CD14-positive monocyte (primary cell): ENCODE measurements at regions of chr21 and their contacts with region 1.

Region 1: GRCh38 chr21:42117229-42117966 is 46.3 kb downstream of the UMODL1 start:
- DNase-seq: peak; percentile 62 to 80 (median 66)
- H3K4me3 ChIP-seq: no peak overlapping the region
- H3K4me3 Mint-ChIP-seq: peak overlapping the region in 1 of 2 donors; percentile 84
- H3K27ac ChIP-seq: no peak overlapping the region
- H3K27ac Mint-ChIP-seq: peak overlapping the region in 4 of 7 donors; percentile 18 to 46 (median 36)
- H3K4me1 ChIP-seq: peaks cover 40 to 42% of the 10 kb centered on the region in 2 donors
- H3K4me1 Mint-ChIP-seq: peaks cover 51% of the 10 kb centered on the region
- H3K27me3 ChIP-seq: peaks cover 5 to 33% of the 10 kb centered on the region in 2 donors
- H3K27me3 Mint-ChIP-seq: peaks cover 30 to 48% (median 39%) of the 10 kb centered on the region in 3 donors
- CTCF ChIP-seq: peak; percentile 98

Region 2: GRCh38 chr21:41612674-41613532 is 504.5 kb before region 1 on chr21:
- intact Hi-C with region 1: loop called in 1 of 2 experiments (anchors 10 kb)
- DNase-seq: peak in 2 of 3 donors; percentile 19 to 30
- H3K4me3 ChIP-seq: no peak overlapping the region
- H3K4me3 Mint-ChIP-seq: peak overlapping the region in 1 of 2 donors; percentile 48
- H3K27ac ChIP-seq: no peak overlapping the region
- H3K27ac Mint-ChIP-seq: no peak overlapping the region
- H3K4me1 ChIP-seq: no peaks in the 10 kb centered on the region
- H3K4me1 Mint-ChIP-seq: no peaks in the 10 kb centered on the region
- H3K27me3 ChIP-seq: peaks cover 0 to 4% of the 10 kb centered on the region in 2 donors
- H3K27me3 Mint-ChIP-seq: peaks cover 9 to 19% (median 11%) of the 10 kb centered on the region in 3 donors
- CTCF ChIP-seq: peak; percentile 82

Region 3: GRCh38 chr21:41816220-41817165 is 300.9 kb before region 1 on chr21:
- intact Hi-C with region 1: loop called (anchors 5 kb)
- DNase-seq: peak; percentile 15 to 46 (median 31)
- H3K4me3 ChIP-seq: peak overlapping the region in 1 of 3 experiments; percentile 28
- H3K4me3 Mint-ChIP-seq: peak overlapping the region in 1 of 2 donors; percentile 71
- H3K27ac ChIP-seq: no peak overlapping the region
- H3K27ac Mint-ChIP-seq: peak overlapping the region in 5 of 7 donors; percentile 6 to 68 (median 33)
- H3K4me1 ChIP-seq: peaks cover 4 to 6% of the 10 kb centered on the region in 2 donors
- H3K4me1 Mint-ChIP-seq: peaks cover 7% of the 10 kb centered on the region
- H3K27me3 ChIP-seq: no peaks in the 10 kb centered on the region
- H3K27me3 Mint-ChIP-seq: no peaks in the 10 kb centered on the region
- CTCF ChIP-seq: peak; percentile 84

Region 4: DNA sequence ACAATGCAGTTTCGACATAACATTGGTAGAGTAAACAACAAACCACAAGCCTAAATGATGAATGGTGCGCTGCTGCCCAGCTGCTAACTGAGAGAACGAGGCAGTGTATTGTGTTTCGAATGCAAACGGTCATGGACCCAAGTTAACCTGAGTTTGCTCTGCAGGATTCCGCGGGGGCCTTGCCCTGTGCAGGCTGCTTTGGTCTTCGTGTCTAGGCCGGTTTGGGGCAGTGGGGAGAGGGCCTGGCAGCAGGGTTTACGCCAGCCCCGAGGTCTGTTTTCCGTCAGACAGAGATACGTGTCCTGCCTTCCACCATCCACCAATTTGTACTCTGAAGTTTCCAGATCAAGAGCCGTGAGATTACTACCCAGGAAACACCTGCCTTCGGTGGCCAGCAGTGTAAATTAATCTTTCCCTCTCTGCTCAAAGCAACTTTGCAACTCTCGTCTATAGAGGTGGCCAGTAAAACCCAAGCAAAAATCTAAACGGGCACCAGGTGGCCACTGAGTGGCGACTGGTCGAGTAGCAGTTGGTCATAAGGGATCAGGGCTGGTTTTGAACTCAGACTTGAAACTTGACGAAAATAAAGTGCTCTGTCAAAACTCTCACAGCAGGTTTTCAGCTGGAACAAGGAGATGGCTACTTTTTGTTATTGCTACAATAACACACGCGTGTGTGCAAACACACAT is 231.9 kb before region 1 on chr21:
- intact Hi-C with region 1: loop called in 1 of 2 experiments (anchors 5 kb)
- DNase-seq: no peak
- H3K4me3 ChIP-seq: no peak overlapping the region
- H3K4me3 Mint-ChIP-seq: peak overlapping the region; percentile 3 to 23
- H3K27ac ChIP-seq: no peak overlapping the region
- H3K27ac Mint-ChIP-seq: peak overlapping the region in 1 of 7 donors; percentile 33
- H3K4me1 ChIP-seq: peaks cover 0 to 6% of the 10 kb centered on the region in 2 donors
- H3K4me1 Mint-ChIP-seq: peaks cover 16% of the 10 kb centered on the region
- H3K27me3 ChIP-seq: no peaks in the 10 kb centered on the region
- H3K27me3 Mint-ChIP-seq: peaks cover 2 to 8% (median 2%) of the 10 kb centered on the region in 3 donors
- CTCF ChIP-seq: peak; percentile 11

Region 5: DNA sequence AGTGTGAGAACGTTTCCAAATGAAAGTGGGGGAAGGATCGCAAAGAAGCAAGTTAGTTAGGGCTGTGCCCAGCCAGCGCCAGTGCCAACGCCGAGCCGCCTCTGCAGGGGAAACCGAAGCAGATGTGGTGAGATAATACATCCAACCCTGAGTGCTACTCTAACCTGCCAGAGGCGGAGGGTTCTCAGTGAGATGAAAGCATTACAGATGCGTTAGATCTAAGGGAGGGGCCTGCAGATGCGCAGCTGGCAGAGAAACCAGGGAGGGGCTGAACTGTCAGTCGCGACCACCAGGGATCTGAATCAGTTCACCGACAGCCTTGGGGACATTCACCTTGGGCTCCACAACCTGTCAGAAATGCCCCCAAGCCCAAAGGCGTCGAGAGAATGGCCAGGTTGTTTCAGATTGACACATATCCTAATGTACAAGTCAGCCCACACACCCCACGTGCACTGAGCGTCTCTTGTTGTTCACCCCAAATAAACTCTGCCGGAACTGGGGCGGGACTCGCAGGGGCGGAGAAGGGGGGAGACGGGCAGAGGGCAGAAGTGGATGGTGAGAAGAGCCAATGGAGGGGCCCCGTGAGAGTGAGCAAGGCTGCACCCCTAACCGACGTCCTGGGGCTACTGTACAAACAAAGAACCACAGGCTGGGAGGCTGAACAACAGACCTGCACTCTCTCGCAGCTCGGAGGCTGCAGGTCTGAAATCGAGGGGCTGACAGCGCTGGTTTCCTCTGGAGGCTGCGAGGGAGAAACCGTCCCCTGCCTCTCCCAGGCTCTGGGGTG is 55.0 kb before region 1 on chr21:
- intact Hi-C with region 1: loop called in 1 of 2 experiments (anchors 10 kb)
- DNase-seq: peak; percentile 55 to 72 (median 64)
- H3K4me3 ChIP-seq: peak overlapping the region in 2 of 3 experiments; percentile 19 to 72
- H3K4me3 Mint-ChIP-seq: peak overlapping the region; percentile 61 to 85
- H3K27ac ChIP-seq: peak overlapping the region; percentile 90 to 95
- H3K27ac Mint-ChIP-seq: peak overlapping the region; percentile 93 to 97 (median 94)
- H3K4me1 ChIP-seq: peaks cover 67 to 73% of the 10 kb centered on the region in 2 donors
- H3K4me1 Mint-ChIP-seq: peaks cover 74% of the 10 kb centered on the region
- H3K27me3 ChIP-seq: no peaks in the 10 kb centered on the region
- H3K27me3 Mint-ChIP-seq: peaks cover 0 to 4% (median 2%) of the 10 kb centered on the region in 3 donors
- CTCF ChIP-seq: no peak

Region 6: DNA sequence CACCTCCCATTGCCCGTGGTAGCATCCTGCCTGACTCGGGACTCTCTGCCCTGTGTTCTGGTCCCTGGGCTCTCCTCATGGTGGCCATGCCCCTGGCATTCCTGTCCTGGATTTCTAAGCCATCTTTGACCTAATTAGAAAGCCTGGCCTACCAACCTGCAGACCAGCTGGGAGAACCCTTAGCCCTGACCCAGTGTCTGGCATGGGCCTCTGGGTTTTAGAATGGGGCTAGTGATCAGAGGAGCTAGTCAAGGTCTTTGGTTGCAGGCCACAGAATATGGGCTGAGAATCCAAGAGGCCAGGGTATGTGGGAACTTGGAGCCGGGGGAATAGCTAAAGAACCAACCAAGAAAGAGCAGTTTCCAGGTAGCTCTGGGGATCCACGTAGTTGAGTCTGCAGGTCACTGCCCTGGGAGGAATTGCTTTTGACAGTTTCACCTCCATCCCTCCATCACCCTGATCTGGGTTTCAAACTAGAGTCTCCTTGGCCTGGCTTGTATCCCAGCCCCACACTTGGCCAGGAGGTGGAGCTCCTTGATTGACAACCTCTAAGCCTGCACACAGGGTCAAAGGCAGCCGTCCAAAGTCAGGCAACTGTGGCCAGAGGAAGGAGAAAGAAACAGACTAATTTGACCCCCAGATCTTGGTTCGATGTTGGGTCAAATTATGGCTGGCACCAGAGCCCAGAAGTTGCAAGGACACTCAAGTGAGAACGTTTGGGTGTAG is 46.8 kb after region 1 on chr21:
- intact Hi-C with region 1: no loop called
- DNase-seq: peak; percentile 64 to 71 (median 67)
- H3K4me3 ChIP-seq: no peak overlapping the region
- H3K4me3 Mint-ChIP-seq: peak overlapping the region in 1 of 2 donors; percentile 48
- H3K27ac ChIP-seq: no peak overlapping the region
- H3K27ac Mint-ChIP-seq: peak overlapping the region in 2 of 7 donors; percentile 60 to 80
- H3K4me1 ChIP-seq: no peaks in the 10 kb centered on the region
- H3K4me1 Mint-ChIP-seq: peaks cover 12% of the 10 kb centered on the region
- H3K27me3 ChIP-seq: peaks cover 0 to 6% of the 10 kb centered on the region in 2 donors
- H3K27me3 Mint-ChIP-seq: peaks cover 5 to 11% (median 8%) of the 10 kb centered on the region in 3 donors
- CTCF ChIP-seq: peak; percentile 73